ENCODE measurements at regions of chr17 and their contacts with region 1.

Region 1: DNA sequence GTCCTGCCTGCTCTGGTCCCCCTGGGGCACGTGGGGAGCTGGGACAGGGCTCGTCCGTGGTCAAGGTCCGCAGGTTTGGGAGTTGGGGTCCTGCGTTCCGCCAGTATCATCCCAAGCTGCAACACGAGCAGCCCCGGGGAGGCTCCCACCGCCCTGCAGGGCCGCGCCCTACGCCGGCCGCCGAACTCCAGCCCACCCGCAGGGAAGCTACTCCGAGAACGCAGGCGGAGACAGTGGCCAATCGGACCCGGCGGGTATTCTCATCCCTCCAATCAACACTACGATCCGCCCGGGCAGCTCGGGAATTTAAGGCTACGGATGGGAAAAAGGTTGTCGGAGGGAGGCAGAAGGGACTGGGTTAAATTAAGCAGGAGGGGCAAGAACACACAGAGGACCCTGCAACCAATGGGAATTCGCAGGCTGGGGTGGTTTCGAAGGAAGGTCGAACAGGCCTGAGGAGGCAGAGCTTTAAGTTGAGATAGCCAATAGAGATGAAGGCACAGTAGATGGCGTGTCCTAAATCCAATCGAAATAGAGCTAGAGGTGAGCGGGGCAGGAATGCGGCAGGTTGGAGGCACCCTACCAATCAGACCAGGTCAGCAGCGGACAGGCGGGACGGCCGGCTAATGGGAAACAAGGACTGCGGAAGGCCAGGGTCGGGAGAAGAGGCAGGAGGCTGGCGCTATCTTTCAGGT is 626 bp downstream of the SPAG7 start:
- DNase-seq: peak; percentile 98
- ATAC-seq: peak; percentile 93
- H3K4me3 Mint-ChIP-seq: no peak overlapping the region
- H3K27ac Mint-ChIP-seq: no peak overlapping the region
- H3K4me1 Mint-ChIP-seq: peaks cover 22% of the 10 kb centered on the region
- H3K27me3 Mint-ChIP-seq: no peaks in the 10 kb centered on the region

Region 2: GRCh38 chr17:4872786-4873185 is 94.2 kb before region 1 on chr17:
- CTCF ChIA-PET with region 1: no interaction called
- POLR2A ChIA-PET with region 1: no interaction called
- DNase-seq: no peak
- ATAC-seq: no peak
- H3K4me3 Mint-ChIP-seq: no peak overlapping the region
- H3K27ac Mint-ChIP-seq: peak overlapping the region; percentile 26
- H3K4me1 Mint-ChIP-seq: no peaks in the 10 kb centered on the region
- H3K27me3 Mint-ChIP-seq: no peaks in the 10 kb centered on the region

Region 3: DNA sequence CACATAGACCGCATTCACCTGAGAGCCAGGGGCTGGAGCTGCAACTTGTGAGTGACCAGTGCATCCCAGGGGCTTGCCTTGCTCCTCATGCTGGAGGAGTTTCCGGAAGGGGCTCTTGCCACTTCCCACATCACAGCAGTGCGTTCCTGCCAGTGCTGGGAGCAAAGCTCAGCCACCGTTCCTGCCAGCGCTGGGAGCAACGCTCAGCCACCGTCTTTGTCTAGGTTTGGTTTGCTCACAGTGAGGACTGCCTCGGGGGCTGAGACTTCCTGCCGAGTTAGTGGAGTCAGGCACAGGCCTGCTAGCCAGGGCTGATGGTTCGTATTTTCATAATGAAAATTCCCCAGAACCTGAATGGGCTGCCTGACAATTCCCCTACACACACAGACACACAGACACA is 58.7 kb before region 1 on chr17:
- CTCF ChIA-PET with region 1: interaction called, 18 read pairs
- POLR2A ChIA-PET with region 1: interaction called, 4 read pairs
- DNase-seq: peak; percentile 40
- ATAC-seq: peak; percentile 48
- H3K4me3 Mint-ChIP-seq: no peak overlapping the region
- H3K27ac Mint-ChIP-seq: no peak overlapping the region
- H3K4me1 Mint-ChIP-seq: peaks cover 7% of the 10 kb centered on the region
- H3K27me3 Mint-ChIP-seq: peaks cover 11% of the 10 kb centered on the region

Region 4: GRCh38 chr17:4948931-4949320 is 18.1 kb before region 1 on chr17:
- CTCF ChIA-PET with region 1: interaction called, 16 read pairs
- POLR2A ChIA-PET with region 1: interaction called, 239 read pairs
- DNase-seq: peak; percentile 84
- ATAC-seq: peak; percentile 46
- H3K4me3 Mint-ChIP-seq: peak overlapping the region; percentile 97
- H3K27ac Mint-ChIP-seq: peak overlapping the region; percentile 99
- H3K4me1 Mint-ChIP-seq: peaks cover 39% of the 10 kb centered on the region
- H3K27me3 Mint-ChIP-seq: no peaks in the 10 kb centered on the region

Region 5: DNA sequence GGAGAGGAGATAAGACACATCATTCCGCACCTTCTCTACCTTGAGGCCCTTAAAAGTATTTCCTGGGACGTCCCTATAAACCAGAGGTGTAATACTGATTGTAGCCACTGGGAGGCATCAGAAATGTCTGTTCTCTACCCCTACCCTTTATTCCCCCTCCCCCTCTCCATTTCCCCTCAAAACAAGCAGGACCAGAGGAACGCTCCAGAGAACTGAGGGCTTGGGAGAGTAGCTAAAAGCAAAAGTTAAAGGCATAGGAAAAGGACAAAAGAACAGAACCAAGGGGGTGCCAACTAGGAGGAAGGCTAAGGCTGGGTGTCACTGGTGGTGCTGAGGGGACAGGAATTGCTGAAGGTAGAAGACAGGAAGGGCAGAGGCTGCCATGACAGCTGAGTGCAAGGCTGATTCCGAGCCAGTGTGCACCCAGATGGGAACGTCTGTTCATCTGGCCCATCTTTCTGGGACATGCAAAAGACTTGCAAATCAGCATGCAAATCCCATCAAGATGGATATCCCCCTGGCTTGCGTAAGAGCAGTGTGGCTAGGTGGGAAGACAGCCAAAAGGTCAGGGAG is 13.7 kb after region 1 on chr17:
- CTCF ChIA-PET with region 1: interaction called, 30 read pairs
- POLR2A ChIA-PET with region 1: interaction called, 11 read pairs
- DNase-seq: peak; percentile 70
- ATAC-seq: peak; percentile 70
- H3K4me3 Mint-ChIP-seq: no peak overlapping the region
- H3K27ac Mint-ChIP-seq: peak overlapping the region; percentile 75
- H3K4me1 Mint-ChIP-seq: peaks cover 21% of the 10 kb centered on the region
- H3K27me3 Mint-ChIP-seq: no peaks in the 10 kb centered on the region

Region 6: DNA sequence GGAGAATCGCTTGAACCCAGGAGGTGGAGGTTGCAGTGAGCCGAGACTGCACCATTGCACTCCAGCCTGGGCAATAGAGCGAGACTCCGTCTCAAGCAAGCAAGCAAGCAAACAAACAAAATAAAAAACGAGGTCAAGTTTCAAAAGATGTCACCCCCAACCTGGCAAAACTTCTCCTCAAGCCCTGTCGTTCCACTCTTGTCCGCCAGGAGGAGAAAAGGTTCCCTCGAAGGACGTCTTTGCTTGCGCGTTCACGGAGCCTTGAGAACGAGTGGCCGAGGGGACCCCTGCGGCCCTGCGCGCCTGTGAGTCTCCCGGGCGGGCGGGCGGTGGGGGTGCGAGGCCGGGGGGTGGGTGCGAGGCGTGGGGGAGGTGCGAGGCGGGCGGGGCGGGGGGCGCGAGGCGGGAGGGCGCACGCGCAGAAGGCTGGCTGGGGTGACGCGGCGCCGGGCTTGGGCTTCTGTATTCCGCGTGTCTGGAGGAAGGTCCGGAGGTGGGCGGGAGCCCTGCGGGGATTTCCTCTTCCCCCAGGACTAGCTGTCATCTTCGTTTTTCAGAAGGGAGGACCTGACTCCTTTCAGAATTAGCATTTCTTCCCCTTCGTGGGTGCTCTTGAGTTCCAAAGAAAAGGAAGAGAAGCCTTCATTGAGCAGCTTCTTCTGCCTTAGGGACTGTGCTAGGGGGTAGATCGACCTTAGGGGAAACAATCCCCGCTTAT is 64.5 kb after region 1 on chr17:
- CTCF ChIA-PET with region 1: interaction called, 10 read pairs
- POLR2A ChIA-PET with region 1: no interaction called
- DNase-seq: peak; percentile 89
- ATAC-seq: peak; percentile 80
- H3K4me3 Mint-ChIP-seq: peak overlapping the region; percentile 81
- H3K27ac Mint-ChIP-seq: peak overlapping the region; percentile 86
- H3K4me1 Mint-ChIP-seq: peaks cover 17% of the 10 kb centered on the region
- H3K27me3 Mint-ChIP-seq: peaks cover 3% of the 10 kb centered on the region

Region 7: GRCh38 chr17:5097101-5097834 is 130.3 kb after region 1 on chr17:
- CTCF ChIA-PET with region 1: no interaction called
- POLR2A ChIA-PET with region 1: no interaction called
- DNase-seq: peak; percentile 29
- ATAC-seq: no peak
- H3K4me3 Mint-ChIP-seq: peak overlapping the region; percentile 12
- H3K27ac Mint-ChIP-seq: no peak overlapping the region
- H3K4me1 Mint-ChIP-seq: peaks cover 10% of the 10 kb centered on the region
- H3K27me3 Mint-ChIP-seq: peaks cover 25% of the 10 kb centered on the region

Measured in activated CD8-positive, alpha-beta T cell treated with anti-CD3 and anti-CD28 coated beads, Interleukin-2, amount 10 ng/mL, durations not matched to agents 7 days and 5 days (primary cell).